Transverse colon (tissue), 4 donors: ENCODE measurements at regions of chr15 and their contacts with region 1.

Region 1: GRCh38 chr15:99104788-99105513 is at the start of gene SYNM:
- DNase-seq: peak; percentile 72
- H3K4me3 ChIP-seq: peak within 1 kb of the TSS; percentile 50 to 63 (median 56)
- H3K27ac ChIP-seq: peak within 1 kb of the TSS; percentile 86 to 92 (median 90)
- H3K4me1 ChIP-seq: peaks cover 0 to 17% (median 12%) of the 10 kb centered on the region in 4 donors
- H3K27me3 ChIP-seq: peaks cover 56% of the 10 kb centered on the region
- CTCF ChIP-seq: peak; percentile 39 to 79 (median 64)
- EP300 ChIP-seq: no peak
- POLR2A ChIP-seq: peak; percentile 59
- total RNA-seq, gene SYNM: 98.3 to 414 (median 158) TPM

Region 2: DNA sequence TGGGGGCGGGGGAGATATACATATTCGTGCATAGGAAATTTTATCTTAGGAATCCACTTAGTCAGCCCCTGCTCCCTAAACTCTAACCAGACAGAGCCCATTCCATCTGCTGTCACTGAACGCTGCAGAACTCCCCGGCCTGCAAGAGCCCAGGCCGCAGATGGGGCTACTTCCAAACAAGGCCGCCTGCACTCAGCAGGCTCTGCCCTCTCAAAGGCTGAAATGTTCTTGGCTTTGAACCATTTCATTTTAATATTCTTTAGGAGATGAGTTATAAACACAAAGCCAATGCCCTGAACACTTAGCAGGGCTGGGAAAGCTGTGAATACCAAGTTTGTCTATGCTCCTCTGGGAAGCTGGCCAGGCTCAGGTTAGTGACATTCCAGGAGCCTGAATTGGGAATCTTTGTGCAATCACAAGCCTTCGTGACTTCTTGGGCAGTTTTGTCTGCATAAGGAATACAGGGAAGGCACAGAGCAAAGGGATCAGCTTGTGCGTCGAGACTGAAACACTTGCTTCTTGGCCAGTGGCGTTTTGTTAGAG is 64.9 kb after region 1 on chr15:
- in situ Hi-C with region 1: no loop called
- intact Hi-C with region 1: loop called (anchors 5 kb)
- DNase-seq: peak; percentile 54
- H3K4me3 ChIP-seq: no peak overlapping the region
- H3K27ac ChIP-seq: peak overlapping the region; percentile 83 to 92 (median 87)
- H3K4me1 ChIP-seq: peaks cover 5 to 30% (median 9%) of the 10 kb centered on the region in 4 donors
- H3K27me3 ChIP-seq: no peaks in the 10 kb centered on the region
- CTCF ChIP-seq: no peak
- EP300 ChIP-seq: peak; percentile 90
- POLR2A ChIP-seq: no peak

Region 3: GRCh38 chr15:99207672-99208071 is 102.7 kb after region 1 on chr15:
- in situ Hi-C with region 1: loop called in 3 of 4 experiments (anchors 5 to 10 kb)
- intact Hi-C with region 1: loop called (anchors 2 kb)
- DNase-seq: no peak
- H3K4me3 ChIP-seq: no peak overlapping the region
- H3K27ac ChIP-seq: no peak overlapping the region
- H3K4me1 ChIP-seq: peaks cover 0 to 9% (median 0%) of the 10 kb centered on the region in 4 donors
- H3K27me3 ChIP-seq: no peaks in the 10 kb centered on the region
- CTCF ChIP-seq: no peak
- EP300 ChIP-seq: no peak
- POLR2A ChIP-seq: no peak

Region 4: GRCh38 chr15:99213187-99213811 is 108.3 kb after region 1 on chr15:
- in situ Hi-C with region 1: loop called in 3 of 4 experiments (anchors 5 to 10 kb)
- intact Hi-C with region 1: loop called (anchors 2 kb)
- DNase-seq: peak; percentile 80
- H3K4me3 ChIP-seq: no peak overlapping the region
- H3K27ac ChIP-seq: peak overlapping the region; percentile 59 to 79 (median 71)
- H3K4me1 ChIP-seq: peaks cover 0 to 9% (median 0%) of the 10 kb centered on the region in 4 donors
- H3K27me3 ChIP-seq: no peaks in the 10 kb centered on the region
- CTCF ChIP-seq: peak; percentile 79 to 85 (median 81)
- EP300 ChIP-seq: no peak
- POLR2A ChIP-seq: no peak